ENCODE measurements at regions of chr15 and their contacts with region 1.

Region 1: DNA sequence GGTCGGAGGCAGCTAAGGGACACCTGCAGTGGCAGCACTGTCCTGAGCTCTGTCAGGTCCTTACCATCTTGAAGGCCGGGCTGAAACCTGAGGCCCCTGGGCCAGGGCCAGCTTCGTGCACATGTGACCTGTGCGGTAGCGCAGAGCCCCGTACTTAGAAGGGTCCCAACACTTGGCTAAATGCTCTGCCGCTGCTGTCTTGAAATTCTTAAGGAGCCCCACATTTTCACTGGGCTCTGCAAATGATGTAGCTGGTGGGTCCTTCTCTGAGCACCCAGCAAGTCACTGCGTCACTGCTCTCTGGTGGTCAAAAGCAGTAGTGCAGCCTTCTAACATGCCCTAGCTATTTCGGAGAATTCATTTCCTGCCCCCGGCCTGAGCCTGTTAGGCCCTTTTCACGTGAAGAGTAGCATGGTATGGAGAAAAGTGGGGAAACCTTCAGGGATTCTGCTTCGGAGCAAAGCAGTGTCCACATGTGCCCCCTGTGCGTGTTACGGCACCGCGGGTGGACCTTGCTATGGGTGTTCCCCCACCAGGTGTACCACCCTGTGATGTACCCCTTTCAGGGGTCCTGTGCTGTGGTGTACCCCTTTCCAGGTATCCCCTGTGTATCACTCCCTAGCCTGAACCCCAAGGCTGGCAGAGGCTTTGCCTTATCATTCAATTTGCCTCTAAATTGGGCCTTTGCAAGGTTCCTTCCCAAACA is 79.7 kb downstream of the TMEM266 start:
- DNase-seq: peak; percentile 71 to 78
- H3K4me3 ChIP-seq: no peak overlapping the region
- H3K4me3 Mint-ChIP-seq: no peak overlapping the region
- H3K27ac Mint-ChIP-seq: no peak overlapping the region
- H3K4me1 ChIP-seq: no peaks in the 10 kb centered on the region
- H3K4me1 Mint-ChIP-seq: peaks cover 4% of the 10 kb centered on the region
- H3K27me3 ChIP-seq: peaks cover 1% of the 10 kb centered on the region; the same call in 1 of the 2 replicates
- H3K27me3 Mint-ChIP-seq: peaks cover 10% of the 10 kb centered on the region
- CTCF ChIP-seq: peak; percentile 78 to 90

Region 2: GRCh38 chr15:75928680-75929608 is 210.6 kb before region 1 on chr15:
- CTCF ChIA-PET with region 1: interaction called, 30 read pairs
- POLR2A ChIA-PET with region 1: no interaction called
- intact Hi-C with region 1: loop called (anchors 1 kb)
- DNase-seq: peak in 1 of 2 experiments; percentile 42
- H3K4me3 ChIP-seq: no peak overlapping the region
- H3K4me3 Mint-ChIP-seq: no peak overlapping the region
- H3K27ac Mint-ChIP-seq: no peak overlapping the region
- H3K4me1 ChIP-seq: peaks cover 14% of the 10 kb centered on the region; the same call in 1 of the 2 replicates
- H3K4me1 Mint-ChIP-seq: peaks cover 18% of the 10 kb centered on the region
- H3K27me3 ChIP-seq: no peaks in the 10 kb centered on the region
- H3K27me3 Mint-ChIP-seq: no peaks in the 10 kb centered on the region
- CTCF ChIP-seq: peak; percentile 44 to 64

Region 3: GRCh38 chr15:76127880-76128279 is 11.6 kb before region 1 on chr15:
- CTCF ChIA-PET with region 1: interaction called, 13 read pairs
- POLR2A ChIA-PET with region 1: no interaction called
- intact Hi-C with region 1: no loop called
- DNase-seq: no peak
- H3K4me3 ChIP-seq: no peak overlapping the region
- H3K4me3 Mint-ChIP-seq: no peak overlapping the region
- H3K27ac Mint-ChIP-seq: no peak overlapping the region
- H3K4me1 ChIP-seq: no peaks in the 10 kb centered on the region
- H3K4me1 Mint-ChIP-seq: no peaks in the 10 kb centered on the region
- H3K27me3 ChIP-seq: no peaks in the 10 kb centered on the region; the same call in 1 of the 2 replicates
- H3K27me3 Mint-ChIP-seq: peaks cover 3% of the 10 kb centered on the region
- CTCF ChIP-seq: no peak